Mammary epithelial cell (primary cell): ENCODE measurements at regions of chr1 and their contacts with region 1.

Region 1: DNA sequence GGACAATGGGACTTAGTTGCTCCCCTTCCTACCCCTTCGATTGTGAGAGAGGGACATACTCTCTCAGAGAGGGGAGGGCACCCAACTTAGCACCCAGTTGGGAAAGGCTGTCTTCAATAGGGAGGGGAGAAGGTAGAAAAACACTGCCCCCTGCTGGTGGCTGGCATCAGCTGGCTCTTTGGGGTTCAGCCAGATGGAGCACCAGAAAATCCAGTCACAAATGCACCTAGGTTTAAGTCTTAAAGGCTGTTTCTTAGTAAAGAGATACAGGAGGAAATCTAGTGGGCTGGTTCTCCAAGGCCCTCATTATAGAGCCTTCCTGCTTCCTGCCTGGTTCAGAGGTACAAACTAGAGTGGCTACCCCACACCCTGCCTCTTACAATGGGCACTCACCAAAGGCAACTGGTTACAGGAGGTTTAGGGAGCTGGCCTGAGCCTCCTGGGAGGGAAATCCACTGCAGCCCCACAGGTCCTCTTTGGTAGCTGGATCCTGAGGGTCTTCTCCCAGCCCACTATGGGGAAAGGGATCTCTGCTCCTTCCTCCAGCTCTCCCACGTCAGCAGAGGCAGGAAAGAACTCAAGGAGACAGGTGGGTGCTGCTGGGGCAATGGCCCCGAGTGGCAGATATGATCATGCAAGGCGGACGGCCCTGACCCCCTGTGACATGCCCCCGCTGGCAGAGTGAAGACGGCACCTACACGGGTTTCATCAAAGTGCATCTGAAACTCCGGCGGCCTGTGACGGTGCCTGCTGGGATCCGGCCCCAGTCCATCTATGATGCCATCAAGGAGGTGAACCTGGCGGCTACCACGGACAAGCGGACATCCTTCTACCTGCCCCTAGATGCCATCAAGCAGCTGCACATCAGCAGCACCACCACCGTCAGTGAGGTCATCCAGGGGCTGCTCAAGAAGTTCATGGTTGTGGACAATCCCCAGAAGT is 28.3 kb downstream of the EIF2D start:
- DNase-seq: peak; percentile 48
- H3K4me3 ChIP-seq: no peak overlapping the region
- H3K27ac ChIP-seq: no peak overlapping the region
- H3K4me1 ChIP-seq: peaks cover 24% of the 10 kb centered on the region
- H3K27me3 ChIP-seq: no peaks in the 10 kb centered on the region
- CTCF ChIP-seq: peak; percentile 94

Region 2: DNA sequence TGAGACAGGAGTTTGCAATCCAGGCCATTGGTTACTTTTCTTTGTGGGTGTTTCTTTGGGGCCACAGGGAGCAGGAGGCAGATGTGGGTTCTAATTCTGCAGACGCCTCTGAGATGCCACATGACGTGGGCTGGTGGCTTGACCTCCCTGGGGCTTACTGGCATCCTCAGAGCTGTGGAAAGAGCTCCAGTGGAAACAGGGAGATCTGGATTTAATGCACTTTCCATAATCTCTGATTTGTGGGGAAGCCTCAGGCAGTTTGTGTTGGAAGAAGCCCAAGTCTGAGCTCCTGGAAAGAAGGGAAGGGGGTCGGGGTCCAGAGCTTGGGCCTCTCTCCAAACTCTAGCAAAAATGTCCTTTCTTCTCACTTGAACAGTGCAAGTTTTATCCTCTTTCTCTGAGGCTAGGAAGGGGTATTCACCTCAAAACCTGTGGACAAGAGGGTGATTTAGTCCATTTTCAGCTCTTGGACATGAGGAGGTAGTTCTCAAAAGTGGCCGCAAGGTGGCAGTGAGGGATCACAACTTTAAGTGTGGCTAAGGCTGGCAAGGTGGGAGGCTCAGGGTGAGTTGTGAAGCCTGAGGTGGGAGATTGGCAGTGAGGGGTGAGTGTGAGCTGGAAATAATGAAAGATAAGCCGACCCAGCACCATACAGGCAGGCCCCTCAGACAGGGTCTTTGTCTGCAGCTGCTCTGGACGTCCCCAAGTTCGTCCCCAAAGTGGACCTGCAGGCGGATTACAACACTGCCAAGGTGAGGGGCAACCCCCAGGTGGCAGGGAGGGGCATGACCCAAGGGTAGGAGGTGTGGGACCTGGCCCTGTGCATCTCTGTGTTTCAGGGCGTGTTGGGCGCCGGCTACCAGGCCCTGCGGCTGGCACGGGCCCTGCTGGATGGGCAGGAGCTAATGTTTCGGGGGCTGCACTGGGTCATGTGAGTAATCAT is 104.5 kb before region 1 on chr1:
- CTCF ChIA-PET with region 1: interaction called, 4 read pairs
- dilution Hi-C with region 1: no loop called
- in situ Hi-C with region 1: no loop called
- intact Hi-C with region 1: loop called (anchors 2 kb)
- DNase-seq: peak; percentile 49
- H3K4me3 ChIP-seq: no peak overlapping the region
- H3K27ac ChIP-seq: no peak overlapping the region
- H3K4me1 ChIP-seq: peaks cover 21% of the 10 kb centered on the region
- H3K27me3 ChIP-seq: no peaks in the 10 kb centered on the region
- CTCF ChIP-seq: peak; percentile 75 to 84

Region 3: DNA sequence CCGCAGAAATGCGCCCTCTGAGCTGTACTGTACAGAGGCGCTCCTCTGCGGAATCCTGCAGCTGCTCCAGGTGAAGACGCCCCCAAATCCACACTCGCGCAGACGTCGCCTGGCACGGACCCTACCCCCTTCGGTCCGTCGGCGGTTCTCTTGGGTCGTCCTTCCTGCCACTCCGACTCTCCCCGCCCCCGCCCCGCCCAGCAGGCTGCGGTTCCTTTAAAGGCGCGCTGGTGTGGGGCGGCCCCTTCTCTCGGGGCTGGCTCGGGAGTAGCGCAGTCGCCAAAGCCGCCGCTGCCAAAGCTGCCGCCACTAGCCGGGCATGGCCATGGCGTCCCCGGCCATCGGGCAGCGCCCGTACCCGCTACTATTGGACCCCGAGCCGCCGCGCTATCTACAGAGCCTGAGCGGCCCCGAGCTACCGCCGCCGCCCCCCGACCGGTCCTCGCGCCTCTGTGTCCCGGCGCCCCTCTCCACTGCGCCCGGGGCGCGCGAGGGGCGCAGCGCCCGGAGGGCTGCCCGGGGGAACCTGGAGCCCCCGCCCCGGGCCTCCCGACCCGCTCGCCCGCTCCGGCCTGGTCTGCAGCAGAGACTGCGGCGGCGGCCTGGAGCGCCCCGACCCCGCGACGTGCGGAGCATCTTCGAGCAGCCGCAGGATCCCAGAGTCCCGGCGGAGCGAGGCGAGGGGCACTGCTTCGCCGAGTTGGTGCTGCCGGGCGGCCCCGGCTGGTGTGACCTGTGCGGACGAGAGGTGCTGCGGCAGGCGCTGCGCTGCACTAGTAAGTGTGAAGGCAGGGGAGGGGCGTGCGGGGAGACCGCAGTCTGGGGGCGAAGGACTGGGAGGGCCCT is 76.5 kb before region 1 on chr1 and contains the start of gene RASSF5:
- CTCF ChIA-PET with region 1: interaction called, 6 read pairs
- dilution Hi-C with region 1: no loop called
- in situ Hi-C with region 1: no loop called
- intact Hi-C with region 1: loop called (anchors 1 kb)
- DNase-seq: peak; percentile 70
- H3K4me3 ChIP-seq: peak within 1 kb of the TSS; percentile 51 to 68 (median 52)
- H3K27ac ChIP-seq: no peak within 1 kb of the TSS
- H3K4me1 ChIP-seq: peaks cover 51% of the 10 kb centered on the region
- H3K27me3 ChIP-seq: no peaks in the 10 kb centered on the region
- CTCF ChIP-seq: no peak
- total RNA-seq, gene RASSF5: 3.5 to 6.7 TPM

Region 4: GRCh38 chr1:206534552-206534951 is 49.4 kb before region 1 on chr1:
- CTCF ChIA-PET with region 1: no interaction called
- dilution Hi-C with region 1: no loop called
- in situ Hi-C with region 1: no loop called
- intact Hi-C with region 1: no loop called
- DNase-seq: no peak
- H3K4me3 ChIP-seq: no peak overlapping the region
- H3K27ac ChIP-seq: no peak overlapping the region
- H3K4me1 ChIP-seq: peaks cover 17% of the 10 kb centered on the region
- H3K27me3 ChIP-seq: no peaks in the 10 kb centered on the region
- CTCF ChIP-seq: no peak

Region 5: DNA sequence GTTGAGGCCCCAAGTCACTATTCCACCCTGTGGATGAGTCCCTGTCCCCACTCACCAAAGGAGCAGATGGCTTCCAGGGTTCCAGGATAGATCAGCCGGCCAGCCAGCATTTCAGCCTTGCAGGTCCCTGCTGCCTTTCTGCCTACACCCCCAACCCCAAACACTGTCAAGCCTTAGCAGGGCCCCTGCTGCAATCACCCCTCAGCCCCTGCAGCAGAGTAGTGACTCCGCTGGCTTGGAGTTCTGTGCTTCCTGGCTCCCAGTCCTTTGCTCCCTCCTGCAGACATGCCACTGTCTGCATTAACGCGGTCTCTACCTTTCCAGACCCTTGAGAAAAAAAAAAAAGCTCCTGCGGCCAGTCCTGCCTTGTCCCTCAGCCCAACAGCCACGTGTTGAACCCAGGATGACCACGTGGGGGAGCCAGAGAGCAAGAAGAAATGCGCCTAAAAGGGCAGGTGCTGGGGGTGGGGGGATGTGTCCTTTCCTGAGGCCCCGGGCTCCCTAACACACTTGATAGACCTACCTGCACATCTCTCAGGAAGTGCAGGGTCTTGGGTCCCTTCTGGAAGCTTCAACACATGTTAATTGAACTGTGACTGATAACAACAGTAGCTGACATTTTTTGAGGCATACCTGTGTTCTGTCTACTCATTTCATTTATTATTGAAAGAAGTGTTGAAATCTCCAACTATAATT is 39.3 kb before region 1 on chr1:
- CTCF ChIA-PET with region 1: no interaction called
- dilution Hi-C with region 1: no loop called
- in situ Hi-C with region 1: no loop called
- intact Hi-C with region 1: loop called (anchors 1 kb)
- DNase-seq: peak; percentile 31
- H3K4me3 ChIP-seq: no peak overlapping the region
- H3K27ac ChIP-seq: no peak overlapping the region
- H3K4me1 ChIP-seq: no peaks in the 10 kb centered on the region
- H3K27me3 ChIP-seq: no peaks in the 10 kb centered on the region
- CTCF ChIP-seq: peak; percentile 84 to 89

Region 6: DNA sequence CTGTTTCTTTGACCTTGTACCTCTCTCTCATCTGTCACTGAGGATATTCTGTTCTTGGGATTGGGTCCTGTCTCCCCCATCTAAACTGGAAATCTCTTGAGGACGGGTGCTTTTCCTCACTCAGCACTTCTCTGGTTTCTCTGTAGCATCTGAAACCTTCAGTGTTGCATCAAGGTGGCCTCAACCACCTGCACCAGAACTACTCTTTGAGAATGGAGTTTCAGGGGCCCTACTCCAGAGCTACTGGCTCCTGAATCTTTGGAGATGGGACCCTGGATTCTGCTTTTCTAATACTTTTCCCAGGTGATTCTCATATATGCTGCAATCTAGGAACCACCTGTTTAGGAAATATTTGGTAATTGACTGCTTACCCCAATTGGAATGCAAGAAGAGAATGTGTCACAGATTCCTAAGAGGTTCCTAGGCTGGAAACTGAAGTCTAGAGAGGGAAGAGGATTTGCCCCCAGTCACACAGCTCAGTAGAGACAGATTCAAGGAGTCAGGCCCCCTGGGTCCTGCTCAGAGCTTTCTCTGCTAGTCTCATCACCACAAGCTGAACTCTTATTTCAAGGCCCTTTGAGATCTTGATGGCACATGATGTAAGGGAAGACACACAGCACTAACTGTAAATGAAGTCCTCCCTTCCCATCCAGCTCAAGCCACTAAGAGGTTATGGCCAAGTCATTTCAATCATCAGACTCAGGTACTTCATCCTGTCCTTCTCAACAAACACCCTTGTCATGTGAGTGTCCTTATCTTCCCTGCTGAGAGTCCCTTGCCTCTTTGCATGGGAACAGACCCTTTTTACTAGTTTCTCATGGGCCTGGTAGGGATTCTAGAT is 20.4 kb before region 1 on chr1:
- CTCF ChIA-PET with region 1: no interaction called
- dilution Hi-C with region 1: no loop called
- in situ Hi-C with region 1: no loop called
- intact Hi-C with region 1: loop called (anchors 2 kb)
- DNase-seq: no peak
- H3K4me3 ChIP-seq: no peak overlapping the region
- H3K27ac ChIP-seq: no peak overlapping the region
- H3K4me1 ChIP-seq: no peaks in the 10 kb centered on the region
- H3K27me3 ChIP-seq: no peaks in the 10 kb centered on the region
- CTCF ChIP-seq: no peak

Region 7: DNA sequence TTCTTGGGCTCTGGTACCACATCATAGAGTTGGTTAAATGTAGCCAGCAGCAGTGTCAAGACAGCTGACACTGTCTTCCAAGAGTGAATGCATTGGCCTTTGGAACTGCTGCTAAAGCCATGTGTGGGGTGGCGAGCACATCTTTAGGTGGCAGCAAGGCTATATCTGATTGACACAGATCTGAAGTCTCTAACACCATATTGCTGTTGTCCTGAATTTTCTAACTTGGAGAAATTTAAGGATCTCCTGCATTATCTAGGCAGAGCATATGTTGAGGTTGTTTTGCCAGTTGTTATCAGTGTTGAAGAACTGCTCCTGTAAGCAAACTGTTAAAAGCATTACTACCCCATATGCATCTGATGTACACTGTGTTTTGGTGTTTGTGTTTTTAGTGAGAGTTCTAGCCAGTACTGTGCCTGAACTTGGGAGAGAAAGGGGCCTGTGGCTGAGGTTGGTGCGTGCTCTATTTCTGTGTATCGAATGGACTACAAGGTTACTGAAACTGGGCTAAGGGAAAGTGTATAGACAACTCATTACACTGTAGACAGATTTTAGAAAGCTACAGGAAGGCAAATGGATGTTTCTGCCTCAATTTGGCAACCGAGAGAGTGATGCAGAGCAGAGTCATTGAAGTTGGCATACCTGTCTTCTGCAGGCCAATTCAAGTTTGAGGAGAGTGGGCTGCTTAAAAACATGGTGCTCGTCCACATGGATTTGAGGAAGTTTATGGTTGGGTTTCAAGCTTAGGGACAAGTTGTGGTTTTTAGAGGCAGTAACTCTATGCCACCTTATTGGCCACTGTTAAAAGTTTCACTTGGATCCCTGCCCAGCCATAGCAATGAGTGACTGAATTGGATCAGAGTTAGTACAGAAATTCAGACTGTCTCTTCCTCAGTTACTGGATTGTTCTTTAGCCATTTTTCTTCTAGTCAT is 68.2 kb after region 1 on chr1:
- CTCF ChIA-PET with region 1: no interaction called
- dilution Hi-C with region 1: no loop called
- in situ Hi-C with region 1: no loop called
- intact Hi-C with region 1: no loop called
- DNase-seq: no peak
- H3K4me3 ChIP-seq: no peak overlapping the region
- H3K27ac ChIP-seq: no peak overlapping the region
- H3K4me1 ChIP-seq: peaks cover 16% of the 10 kb centered on the region
- H3K27me3 ChIP-seq: no peaks in the 10 kb centered on the region
- CTCF ChIP-seq: no peak